ENCODE measurements at regions of chr11 and their contacts with region 1.

Region 1: GRCh38 chr11:14041040-14041439 is 78.5 kb downstream of the SPON1 start:
- DNase-seq: peak; percentile 41
- H3K4me3 ChIP-seq: no peak overlapping the region
- H3K27ac ChIP-seq: no peak overlapping the region
- H3K4me1 ChIP-seq: no peaks in the 10 kb centered on the region
- CTCF ChIP-seq: peak; percentile 77

Region 2: GRCh38 chr11:13772223-13773046 is 268.6 kb before region 1 on chr11:
- CTCF ChIA-PET with region 1: interaction called, 3 read pairs
- POLR2A ChIA-PET with region 1: interaction called, 4 read pairs
- intact Hi-C with region 1: loop called (anchors 1 kb)
- DNase-seq: peak; percentile 90
- H3K4me3 ChIP-seq: no peak overlapping the region
- H3K27ac ChIP-seq: peak overlapping the region; percentile 21
- H3K4me1 ChIP-seq: peaks cover 25% of the 10 kb centered on the region
- CTCF ChIP-seq: peak; percentile 98

Region 3: GRCh38 chr11:13902523-13902922 is 138.5 kb before region 1 on chr11:
- CTCF ChIA-PET with region 1: no interaction called
- POLR2A ChIA-PET with region 1: no interaction called
- intact Hi-C with region 1: no loop called
- DNase-seq: no peak
- H3K4me3 ChIP-seq: no peak overlapping the region
- H3K27ac ChIP-seq: no peak overlapping the region
- H3K4me1 ChIP-seq: peaks cover 34% of the 10 kb centered on the region
- CTCF ChIP-seq: no peak

Region 4: GRCh38 chr11:13923716-13924650 is 117.1 kb before region 1 on chr11:
- CTCF ChIA-PET with region 1: no interaction called
- POLR2A ChIA-PET with region 1: no interaction called
- intact Hi-C with region 1: no loop called
- DNase-seq: peak; percentile 90
- H3K4me3 ChIP-seq: peak overlapping the region; percentile 49
- H3K27ac ChIP-seq: peak overlapping the region; percentile 95
- H3K4me1 ChIP-seq: peaks cover 89% of the 10 kb centered on the region
- CTCF ChIP-seq: no peak